Activated naive CD4-positive, alpha-beta T cell treated with anti-CD3 and anti-CD28 coated beads, Interleukin-2, amount 10 ng/mL, durations not matched to agents 7 days and 5 days (primary cell): ENCODE measurements at regions of chr7 and their contacts with region 1.

Region 1: DNA sequence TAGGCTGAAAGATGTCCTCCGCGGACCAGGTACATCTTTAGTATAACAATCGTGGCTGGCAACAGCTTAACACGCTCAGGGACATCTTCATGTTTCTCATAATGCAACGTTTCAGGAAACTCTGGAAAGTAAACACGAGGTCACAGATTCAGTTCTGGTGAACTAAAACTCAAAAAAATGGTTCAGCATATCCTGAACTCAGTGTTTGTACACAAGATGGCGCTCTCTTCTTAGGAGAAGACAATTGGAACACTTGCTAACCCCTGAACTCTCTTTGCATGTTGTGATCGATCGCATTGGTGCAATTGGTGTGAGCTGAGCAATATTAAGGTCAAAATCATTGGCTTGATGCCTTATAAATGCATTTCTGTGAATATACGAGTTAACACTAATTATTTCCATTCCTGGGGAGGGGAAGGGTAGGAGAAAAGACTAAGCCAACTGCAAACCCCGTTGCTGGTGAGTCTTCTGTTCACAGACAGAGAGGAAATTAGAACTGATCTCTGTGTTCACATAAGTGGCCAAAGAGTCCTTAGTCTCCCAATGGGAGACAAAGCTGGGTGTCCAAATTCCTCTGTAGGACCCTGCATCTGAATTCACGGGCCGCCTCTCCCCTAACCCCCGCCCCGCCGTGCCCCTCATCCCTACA is 52.6 kb upstream of the FAM180A start:
- DNase-seq: peak; percentile 24
- H3K4me3 Mint-ChIP-seq: no peak overlapping the region
- H3K27ac Mint-ChIP-seq: no peak overlapping the region
- H3K4me1 Mint-ChIP-seq: no peaks in the 10 kb centered on the region
- H3K27me3 Mint-ChIP-seq: peaks cover 10% of the 10 kb centered on the region

Region 2: GRCh38 chr7:135575296-135575695 is 225.9 kb before region 1 on chr7:
- CTCF ChIA-PET with region 1: no interaction called
- DNase-seq: peak; percentile 29
- H3K4me3 Mint-ChIP-seq: no peak overlapping the region
- H3K27ac Mint-ChIP-seq: peak overlapping the region; percentile 87
- H3K4me1 Mint-ChIP-seq: peaks cover 15% of the 10 kb centered on the region
- H3K27me3 Mint-ChIP-seq: no peaks in the 10 kb centered on the region

Region 3: GRCh38 chr7:136009488-136010079 is 208.4 kb after region 1 on chr7:
- CTCF ChIA-PET with region 1: interaction called, 30 read pairs
- DNase-seq: no peak
- H3K4me3 Mint-ChIP-seq: no peak overlapping the region
- H3K27ac Mint-ChIP-seq: no peak overlapping the region
- H3K4me1 Mint-ChIP-seq: no peaks in the 10 kb centered on the region
- H3K27me3 Mint-ChIP-seq: peaks cover 11% of the 10 kb centered on the region